Activated CD4-positive, alpha-beta memory T cell treated with anti-CD3 and anti-CD28 coated beads for 36 hours (primary cell): ENCODE measurements at regions of chr10 and their contacts with region 1.

Region 1: GRCh38 chr10:35236739-35237138 is 99.6 kb upstream of the CCNY start:
- DNase-seq: no peak
- H3K4me3 Mint-ChIP-seq: no peak overlapping the region
- H3K27ac Mint-ChIP-seq: no peak overlapping the region
- H3K4me1 Mint-ChIP-seq: no peaks in the 10 kb centered on the region
- H3K27me3 Mint-ChIP-seq: no peaks in the 10 kb centered on the region

Region 2: GRCh38 chr10:34824870-34825269 is 411.9 kb before region 1 on chr10:
- CTCF ChIA-PET with region 1: no interaction called
- POLR2A ChIA-PET with region 1: no interaction called
- intact Hi-C with region 1: no loop called
- DNase-seq: no peak
- H3K4me3 Mint-ChIP-seq: no peak overlapping the region
- H3K27ac Mint-ChIP-seq: no peak overlapping the region
- H3K4me1 Mint-ChIP-seq: no peaks in the 10 kb centered on the region
- H3K27me3 Mint-ChIP-seq: peaks cover 6% of the 10 kb centered on the region

Region 3: GRCh38 chr10:35563261-35563891 is 326.6 kb after region 1 on chr10:
- CTCF ChIA-PET with region 1: interaction called, 23 read pairs
- POLR2A ChIA-PET with region 1: no interaction called
- intact Hi-C with region 1: loop called (anchors 5 kb)
- DNase-seq: peak; percentile 61
- H3K4me3 Mint-ChIP-seq: no peak overlapping the region
- H3K27ac Mint-ChIP-seq: no peak overlapping the region
- H3K4me1 Mint-ChIP-seq: no peaks in the 10 kb centered on the region
- H3K27me3 Mint-ChIP-seq: no peaks in the 10 kb centered on the region

Region 4: GRCh38 chr10:36181401-36181800 is 944.7 kb after region 1 on chr10:
- CTCF ChIA-PET with region 1: no interaction called
- POLR2A ChIA-PET with region 1: no interaction called
- intact Hi-C with region 1: no loop called
- DNase-seq: no peak
- H3K4me3 Mint-ChIP-seq: no peak overlapping the region
- H3K27ac Mint-ChIP-seq: no peak overlapping the region
- H3K4me1 Mint-ChIP-seq: no peaks in the 10 kb centered on the region
- H3K27me3 Mint-ChIP-seq: no peaks in the 10 kb centered on the region